ENCODE measurements at regions of chr17 and their contacts with region 1.

Region 1: DNA sequence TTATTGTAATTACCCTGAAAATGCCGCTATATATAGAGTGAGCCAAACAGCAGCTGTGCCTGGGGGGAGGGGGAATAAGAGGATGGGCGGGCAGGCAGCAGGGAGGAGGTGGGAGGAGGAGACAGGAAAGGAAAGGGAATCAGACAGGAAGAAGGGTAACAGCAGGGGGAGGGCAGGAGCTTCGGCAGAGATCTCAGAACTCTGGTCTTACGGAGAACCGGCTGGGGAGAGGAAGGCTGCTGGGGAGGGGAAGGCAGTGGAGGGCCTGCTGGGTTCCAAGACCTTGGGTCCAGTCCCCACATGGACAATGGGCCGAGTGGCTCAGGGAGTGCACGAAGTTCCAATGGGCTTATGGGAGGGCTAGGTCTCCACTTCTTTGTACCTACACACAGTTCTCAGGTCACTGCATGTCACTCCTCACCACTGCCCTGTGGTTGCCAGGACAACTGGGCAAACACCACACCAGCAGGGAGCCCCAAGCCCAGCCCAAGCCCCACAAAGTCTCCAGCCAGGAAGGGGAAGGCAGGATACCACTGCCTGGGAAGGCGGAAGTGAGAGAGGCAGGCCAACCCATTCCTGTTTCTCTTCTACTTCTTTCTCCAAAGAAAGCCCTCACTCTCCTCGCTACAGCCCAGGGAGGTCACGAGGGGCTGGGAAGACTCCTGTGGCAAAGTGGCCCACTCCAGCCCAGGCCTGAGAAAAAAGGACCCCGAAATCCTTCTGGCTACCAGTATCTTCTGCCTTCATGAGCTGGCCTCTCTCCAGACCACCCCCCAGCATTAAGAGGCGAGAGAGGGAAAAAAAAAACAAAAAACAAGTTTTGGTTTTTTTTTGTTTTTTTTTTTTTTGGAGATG is 25.3 kb downstream of the G6PC3 start:
- H3K4me3 Mint-ChIP-seq: peak overlapping the region; percentile 75
- H3K27ac Mint-ChIP-seq: peak overlapping the region; percentile 97
- H3K4me1 Mint-ChIP-seq: peaks cover 51% of the 10 kb centered on the region
- H3K27me3 Mint-ChIP-seq: no peaks in the 10 kb centered on the region

Region 2: GRCh38 chr17:44059101-44059892 is 36.6 kb before region 1 on chr17:
- intact Hi-C with region 1: no loop called
- H3K4me3 Mint-ChIP-seq: no peak overlapping the region
- H3K27ac Mint-ChIP-seq: no peak overlapping the region
- H3K4me1 Mint-ChIP-seq: peaks cover 28% of the 10 kb centered on the region
- H3K27me3 Mint-ChIP-seq: no peaks in the 10 kb centered on the region

Region 3: GRCh38 chr17:44070455-44071197 is 25.2 kb before region 1 on chr17 and contains the start of gene G6PC3:
- intact Hi-C with region 1: loop called (anchors 2 kb)
- H3K4me3 Mint-ChIP-seq: peak within 1 kb of the TSS; percentile 84
- H3K27ac Mint-ChIP-seq: peak within 1 kb of the TSS; percentile 99
- H3K4me1 Mint-ChIP-seq: peaks cover 64% of the 10 kb centered on the region
- H3K27me3 Mint-ChIP-seq: no peaks in the 10 kb centered on the region

Region 4: DNA sequence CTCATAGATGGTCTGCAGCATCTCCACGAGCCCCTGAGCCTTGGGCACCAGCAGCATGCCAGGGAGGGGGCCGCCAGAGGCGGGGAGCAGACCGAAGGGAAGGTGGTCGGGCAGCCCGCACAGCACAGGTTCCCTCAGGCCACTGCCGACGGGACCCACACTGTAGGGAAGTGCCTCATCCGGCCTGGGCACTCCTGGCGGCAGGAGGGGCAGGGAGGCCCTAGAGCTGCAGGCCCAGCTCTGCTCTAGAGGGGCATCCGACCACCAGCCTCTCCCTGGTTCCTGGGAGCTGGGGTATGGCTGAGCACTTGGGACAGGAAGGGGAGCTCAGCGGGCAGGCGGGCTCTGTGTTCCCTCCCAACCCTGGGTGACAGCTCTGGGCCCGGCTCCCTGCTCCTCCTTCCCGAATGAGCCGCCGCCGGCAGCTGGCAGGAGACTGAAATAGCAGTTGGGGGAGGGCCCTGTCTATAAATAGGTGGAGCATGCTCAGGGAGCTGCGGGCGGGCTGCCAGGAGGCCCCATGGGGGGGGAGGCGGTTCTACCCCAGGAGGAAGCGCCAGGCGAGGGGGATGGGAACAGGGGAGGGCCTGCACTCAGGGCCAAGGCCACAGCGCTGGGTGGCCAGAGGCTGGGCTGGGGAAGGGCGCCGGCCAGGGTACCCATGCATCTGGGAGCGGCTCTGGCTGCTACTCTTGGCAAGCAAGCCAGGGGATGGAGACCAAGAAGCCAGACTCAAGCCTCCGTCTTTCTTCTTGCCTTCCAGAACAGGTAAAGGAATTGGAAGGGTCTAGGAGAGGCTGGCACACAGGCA is 15.2 kb after region 1 on chr17:
- intact Hi-C with region 1: loop called (anchors 2 kb)
- H3K4me3 Mint-ChIP-seq: peak overlapping the region; percentile 68
- H3K27ac Mint-ChIP-seq: peak overlapping the region; percentile 73
- H3K4me1 Mint-ChIP-seq: peaks cover 64% of the 10 kb centered on the region
- H3K27me3 Mint-ChIP-seq: no peaks in the 10 kb centered on the region

Region 5: GRCh38 chr17:44123356-44124117 is 27.7 kb after region 1 on chr17 and contains the start of gene HDAC5:
- intact Hi-C with region 1: loop called (anchors 1 kb)
- H3K4me3 Mint-ChIP-seq: peak within 1 kb of the TSS; percentile 90
- H3K27ac Mint-ChIP-seq: peak within 1 kb of the TSS; percentile 96
- H3K4me1 Mint-ChIP-seq: peaks cover 41% of the 10 kb centered on the region
- H3K27me3 Mint-ChIP-seq: no peaks in the 10 kb centered on the region

Region 6: DNA sequence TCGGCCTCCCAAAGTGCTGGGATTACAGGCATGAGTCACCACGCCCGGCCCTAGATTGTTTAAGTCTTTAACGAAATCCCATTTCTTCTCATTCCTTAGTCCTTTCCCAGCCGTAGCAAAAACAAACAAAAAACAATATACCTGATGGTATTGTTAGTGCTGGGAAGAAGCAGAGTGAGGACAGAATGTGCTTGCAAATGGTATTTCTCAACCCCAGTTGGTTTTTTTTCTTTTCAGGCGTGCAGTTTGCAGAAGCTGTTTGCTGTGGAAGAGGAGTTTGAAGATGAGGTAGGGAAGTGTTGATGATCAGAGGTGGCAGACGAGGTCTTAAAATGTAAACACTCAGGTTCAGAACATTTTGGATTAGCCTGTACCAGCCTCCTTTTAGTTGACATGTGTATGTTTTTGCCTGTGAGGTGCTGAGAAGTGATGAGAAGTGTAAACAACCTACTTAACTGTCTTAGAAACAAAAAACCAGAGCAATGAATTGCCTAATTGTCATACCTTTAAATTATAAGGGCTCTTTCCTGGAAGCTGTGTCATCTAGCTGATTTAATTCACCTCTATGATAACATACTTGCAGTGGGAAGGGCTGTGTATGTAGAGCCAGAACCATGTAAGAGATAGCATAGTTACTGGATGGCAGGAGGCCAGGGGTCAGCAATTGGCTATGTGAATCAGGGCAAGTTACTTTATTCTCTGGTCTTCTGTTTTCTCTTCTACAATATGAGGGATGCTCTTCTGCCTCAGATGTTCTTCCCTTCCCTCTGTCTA is 49.3 kb after region 1 on chr17:
- intact Hi-C with region 1: no loop called
- H3K4me3 Mint-ChIP-seq: no peak overlapping the region
- H3K27ac Mint-ChIP-seq: no peak overlapping the region
- H3K4me1 Mint-ChIP-seq: peaks cover 35% of the 10 kb centered on the region
- H3K27me3 Mint-ChIP-seq: no peaks in the 10 kb centered on the region